ENCODE measurements at regions of chr11 and their contacts with region 1.

Region 1: GRCh38 chr11:86919557-86920210 is 35.5 kb downstream of the FZD4 start:
- DNase-seq: peak; percentile 38 to 65
- H3K4me3 ChIP-seq: no peak overlapping the region
- H3K27ac ChIP-seq: no peak overlapping the region
- H3K4me1 ChIP-seq: peaks cover 23% of the 10 kb centered on the region
- H3K27me3 ChIP-seq: no peaks in the 10 kb centered on the region
- CTCF ChIP-seq: peak; percentile 86

Region 2: GRCh38 chr11:85595285-85595884 is 1324.3 kb before region 1 on chr11:
- CTCF ChIA-PET with region 1: no interaction called
- POLR2A ChIA-PET with region 1: no interaction called
- intact Hi-C with region 1: loop called (anchors 10 kb)
- DNase-seq: peak in 1 of 2 experiments; percentile 51
- H3K4me3 ChIP-seq: no peak overlapping the region
- H3K27ac ChIP-seq: no peak overlapping the region
- H3K4me1 ChIP-seq: no peaks in the 10 kb centered on the region
- H3K27me3 ChIP-seq: no peaks in the 10 kb centered on the region
- CTCF ChIP-seq: peak; percentile 82

Region 3: DNA sequence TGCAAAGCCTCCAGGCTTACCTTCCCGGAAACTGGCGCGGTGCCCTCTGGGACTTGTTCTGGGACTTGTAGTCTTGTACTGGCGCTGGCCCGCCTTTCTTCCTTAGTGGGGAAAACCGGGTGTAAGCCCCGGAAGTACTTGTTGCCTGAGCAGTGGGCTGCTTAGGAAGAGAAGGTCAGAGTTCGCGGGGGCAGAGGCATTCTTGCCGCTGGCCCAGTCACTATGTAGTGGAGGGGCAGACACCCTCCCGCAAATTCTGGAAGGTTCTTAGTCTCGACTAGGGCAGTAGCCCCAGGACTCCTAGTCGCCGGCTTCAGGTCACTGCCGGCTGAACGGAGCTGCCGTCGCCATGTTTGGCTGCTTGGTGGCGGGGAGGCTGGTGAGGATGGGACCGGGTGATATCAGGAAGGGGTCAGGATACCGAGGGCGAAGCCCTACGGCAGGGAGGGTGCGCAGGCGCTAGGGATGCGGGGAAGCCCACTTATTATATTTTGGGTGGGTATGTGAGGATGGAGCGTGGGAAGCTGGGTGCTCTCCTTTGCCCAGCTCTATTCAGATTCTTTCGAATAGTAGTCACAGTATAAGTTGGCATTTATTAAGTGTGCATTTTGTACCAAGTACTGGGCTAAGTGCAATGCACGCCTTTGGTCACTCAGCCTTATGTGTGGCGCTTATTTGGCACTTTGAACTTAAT is 617.4 kb before region 1 on chr11 and contains the start of gene HIKESHI:
- CTCF ChIA-PET with region 1: no interaction called
- POLR2A ChIA-PET with region 1: no interaction called
- intact Hi-C with region 1: loop called (anchors 5 kb)
- DNase-seq: peak; percentile 94 to 96
- H3K4me3 ChIP-seq: peak within 1 kb of the TSS; percentile 78
- H3K27ac ChIP-seq: peak within 1 kb of the TSS; percentile 55
- H3K4me1 ChIP-seq: peaks cover 13% of the 10 kb centered on the region
- H3K27me3 ChIP-seq: no peaks in the 10 kb centered on the region
- CTCF ChIP-seq: no peak
- total RNA-seq, gene HIKESHI: 34.5 and 42.0 TPM in 2 replicates

Region 4: GRCh38 chr11:86456052-86456939 is 463.4 kb before region 1 on chr11:
- CTCF ChIA-PET with region 1: no interaction called
- POLR2A ChIA-PET with region 1: no interaction called
- intact Hi-C with region 1: loop called (anchors 1 kb)
- DNase-seq: peak; percentile 78
- H3K4me3 ChIP-seq: no peak overlapping the region
- H3K27ac ChIP-seq: no peak overlapping the region
- H3K4me1 ChIP-seq: peaks cover 31% of the 10 kb centered on the region
- H3K27me3 ChIP-seq: no peaks in the 10 kb centered on the region
- CTCF ChIP-seq: peak; percentile 96

Region 5: GRCh38 chr11:86592659-86593451 is 326.8 kb before region 1 on chr11:
- CTCF ChIA-PET with region 1: no interaction called
- POLR2A ChIA-PET with region 1: no interaction called
- intact Hi-C with region 1: loop called (anchors 1 kb)
- DNase-seq: peak; percentile 91 to 100
- H3K4me3 ChIP-seq: no peak overlapping the region
- H3K27ac ChIP-seq: peak overlapping the region; percentile 97
- H3K4me1 ChIP-seq: peaks cover 66% of the 10 kb centered on the region
- H3K27me3 ChIP-seq: no peaks in the 10 kb centered on the region
- CTCF ChIP-seq: no peak

Region 6: DNA sequence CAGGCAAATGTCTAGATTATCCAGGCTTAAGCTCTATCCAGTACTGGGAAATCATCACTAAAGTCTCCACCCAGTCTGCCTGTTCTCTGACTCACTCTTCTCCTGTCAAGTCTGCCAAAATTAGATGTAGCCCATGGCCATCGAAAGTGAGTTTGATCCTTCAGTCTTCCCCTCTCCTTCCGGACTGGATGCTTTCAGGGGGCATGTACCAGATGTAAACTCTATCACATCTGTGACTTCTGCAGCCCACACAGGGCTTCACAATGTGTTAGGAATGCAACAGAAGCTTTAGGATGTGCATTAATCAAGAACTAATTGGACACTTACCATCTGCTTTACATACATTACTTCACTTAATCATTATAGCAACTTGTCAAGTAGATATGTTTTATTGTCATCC is 259.6 kb before region 1 on chr11:
- CTCF ChIA-PET with region 1: no interaction called
- POLR2A ChIA-PET with region 1: no interaction called
- intact Hi-C with region 1: no loop called
- DNase-seq: no peak
- H3K4me3 ChIP-seq: no peak overlapping the region
- H3K27ac ChIP-seq: no peak overlapping the region
- H3K4me1 ChIP-seq: no peaks in the 10 kb centered on the region
- H3K27me3 ChIP-seq: no peaks in the 10 kb centered on the region
- CTCF ChIP-seq: no peak

Region 7: DNA sequence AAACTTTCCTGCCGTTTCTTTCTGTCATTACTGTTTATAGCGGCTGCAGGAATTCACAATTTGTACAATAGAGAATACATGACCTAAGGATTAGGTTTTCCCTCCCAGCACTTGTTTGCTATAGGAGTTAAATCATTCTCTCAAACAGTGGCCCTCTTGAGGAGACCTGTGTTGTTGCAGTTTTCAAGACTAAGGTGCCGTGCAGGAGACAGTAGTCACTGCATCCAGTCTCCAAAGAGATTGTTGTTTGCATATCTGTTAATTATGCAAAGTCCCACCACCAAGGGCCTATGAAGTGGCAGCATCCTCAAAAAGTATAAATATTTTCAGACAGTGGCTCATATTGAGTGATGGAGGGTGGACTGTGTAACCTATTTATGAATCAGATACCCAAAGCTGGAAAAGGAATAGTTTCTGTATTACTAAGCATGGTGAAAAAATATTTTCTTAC is 117.1 kb before region 1 on chr11:
- CTCF ChIA-PET with region 1: no interaction called
- POLR2A ChIA-PET with region 1: no interaction called
- intact Hi-C with region 1: loop called (anchors 5 kb)
- DNase-seq: peak; percentile 46 to 93
- H3K4me3 ChIP-seq: peak overlapping the region; percentile 92
- H3K27ac ChIP-seq: peak overlapping the region; percentile 68
- H3K4me1 ChIP-seq: peaks cover 48% of the 10 kb centered on the region
- H3K27me3 ChIP-seq: no peaks in the 10 kb centered on the region
- CTCF ChIP-seq: peak; percentile 89

Region 8: DNA sequence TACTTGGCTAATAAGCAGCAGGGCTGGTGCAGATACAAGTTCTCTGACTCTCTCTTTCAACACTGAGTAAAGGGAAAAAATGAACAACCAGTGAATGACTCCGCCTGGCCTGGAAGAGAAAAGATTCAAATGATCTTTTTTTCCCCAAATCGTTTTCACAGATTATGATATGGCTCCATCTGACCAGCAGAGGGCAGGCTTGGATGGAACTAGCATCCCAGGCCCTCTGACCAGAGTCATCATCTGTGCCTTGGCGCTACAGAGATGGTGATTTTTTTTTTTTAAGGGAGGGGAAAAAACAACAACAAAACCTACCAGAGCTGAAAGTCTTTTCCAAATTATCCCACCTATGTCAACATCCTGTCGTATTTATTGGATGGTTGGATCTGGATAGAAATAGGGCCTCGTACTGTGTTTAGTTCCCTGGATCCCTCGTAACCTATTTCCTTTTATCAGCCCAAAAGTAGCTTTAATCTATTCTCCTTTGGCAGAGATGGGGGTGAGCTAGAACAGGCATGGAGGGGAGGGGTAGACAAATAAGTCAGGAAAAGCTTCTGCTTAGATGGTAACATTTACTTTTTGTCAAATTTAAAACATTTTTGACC is 49.6 kb before region 1 on chr11:
- CTCF ChIA-PET with region 1: interaction called, 3 read pairs
- POLR2A ChIA-PET with region 1: no interaction called
- intact Hi-C with region 1: loop called (anchors 1 kb)
- DNase-seq: peak in 1 of 2 experiments; percentile 25
- H3K4me3 ChIP-seq: no peak overlapping the region
- H3K27ac ChIP-seq: no peak overlapping the region
- H3K4me1 ChIP-seq: no peaks in the 10 kb centered on the region
- H3K27me3 ChIP-seq: no peaks in the 10 kb centered on the region
- CTCF ChIP-seq: peak; percentile 95

Region 9: GRCh38 chr11:86955361-86956120 is 35.9 kb after region 1 on chr11 and contains the start of gene FZD4:
- CTCF ChIA-PET with region 1: no interaction called
- POLR2A ChIA-PET with region 1: no interaction called
- intact Hi-C with region 1: no loop called
- DNase-seq: peak; percentile 77 to 91
- H3K4me3 ChIP-seq: peak within 1 kb of the TSS; percentile 85
- H3K27ac ChIP-seq: peak within 1 kb of the TSS; percentile 56
- H3K4me1 ChIP-seq: peaks cover 16% of the 10 kb centered on the region
- H3K27me3 ChIP-seq: no peaks in the 10 kb centered on the region
- CTCF ChIP-seq: peak; percentile 54; the same call in 1 of the 2 replicates
- total RNA-seq, gene FZD4: 2.6 TPM in 2 replicates

Region 10: GRCh38 chr11:86978756-86979608 is 59.3 kb after region 1 on chr11:
- CTCF ChIA-PET with region 1: no interaction called
- POLR2A ChIA-PET with region 1: no interaction called
- intact Hi-C with region 1: no loop called
- DNase-seq: no peak
- H3K4me3 ChIP-seq: no peak overlapping the region
- H3K27ac ChIP-seq: no peak overlapping the region
- H3K4me1 ChIP-seq: peaks cover 19% of the 10 kb centered on the region
- H3K27me3 ChIP-seq: no peaks in the 10 kb centered on the region
- CTCF ChIP-seq: peak; percentile 83

Measured in PC-9 (cell line).